AG04449 (cell line): ENCODE measurements at regions of chr12 and their contacts with region 1.

Region 1: DNA sequence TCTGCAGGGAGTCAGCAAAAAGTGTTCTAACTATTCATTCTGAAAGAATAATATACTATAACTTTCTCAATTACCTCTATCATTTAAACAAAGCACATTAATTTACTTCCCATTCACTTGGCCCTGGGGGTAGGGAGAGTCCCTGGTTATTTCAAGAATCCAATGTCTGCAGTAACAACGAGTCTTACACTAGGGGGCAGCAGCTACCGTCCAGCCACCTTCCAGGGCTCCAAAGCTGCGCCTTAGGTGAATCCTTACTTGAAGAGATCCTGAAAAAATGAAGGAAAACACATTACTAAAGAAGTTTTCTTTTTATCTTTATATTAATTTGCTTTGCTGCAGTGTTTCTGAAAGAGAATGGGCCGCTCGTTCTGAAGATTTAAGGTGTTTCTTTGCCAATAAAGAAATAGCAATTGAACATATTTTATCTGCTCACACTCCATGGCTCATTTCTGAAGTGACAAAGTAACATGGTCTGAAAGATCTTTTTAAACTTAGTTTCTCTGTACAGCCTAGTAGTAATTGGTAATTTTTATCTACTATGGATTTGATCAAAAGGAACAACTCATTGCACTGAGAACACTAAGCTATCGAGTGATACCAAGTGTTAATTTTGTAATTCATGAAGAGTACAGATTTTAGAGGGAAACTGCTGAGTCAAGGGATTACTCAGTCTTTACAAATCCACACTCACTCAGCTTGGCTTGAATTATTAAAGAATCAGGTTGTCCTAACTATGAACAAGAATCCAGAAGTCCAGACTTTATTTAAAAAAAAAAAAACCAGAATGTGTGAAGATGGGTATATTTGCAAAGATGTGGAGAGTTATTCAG is 27.6 kb downstream of the BHLHE41 start:
- DNase-seq: no peak
- H3K4me3 ChIP-seq: no peak overlapping the region
- CTCF ChIP-seq: peak; percentile 86

Region 2: DNA sequence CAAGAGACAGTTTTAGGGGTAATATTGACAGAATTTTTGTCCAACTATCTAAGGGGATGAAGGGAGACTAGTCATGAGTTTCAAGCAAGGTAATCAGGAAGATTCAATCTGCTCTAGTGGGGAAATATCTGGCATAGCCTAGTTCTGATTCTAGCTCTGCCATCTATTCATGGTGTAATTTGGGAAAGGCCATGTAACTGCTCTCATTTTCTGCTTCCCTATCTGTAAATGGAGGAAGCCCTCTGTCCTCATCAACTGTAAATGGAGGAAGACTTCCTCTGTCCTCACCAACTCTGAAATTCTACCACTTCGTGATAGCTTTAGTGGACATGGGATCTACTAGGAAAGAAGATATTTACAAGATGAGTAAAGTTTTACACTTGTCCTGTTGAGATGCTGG is 10.3 kb before region 1 on chr12:
- CTCF ChIA-PET with region 1: interaction called, 11 read pairs
- POLR2A ChIA-PET with region 1: no interaction called
- DNase-seq: no peak
- H3K4me3 ChIP-seq: no peak overlapping the region
- CTCF ChIP-seq: no peak

Region 3: DNA sequence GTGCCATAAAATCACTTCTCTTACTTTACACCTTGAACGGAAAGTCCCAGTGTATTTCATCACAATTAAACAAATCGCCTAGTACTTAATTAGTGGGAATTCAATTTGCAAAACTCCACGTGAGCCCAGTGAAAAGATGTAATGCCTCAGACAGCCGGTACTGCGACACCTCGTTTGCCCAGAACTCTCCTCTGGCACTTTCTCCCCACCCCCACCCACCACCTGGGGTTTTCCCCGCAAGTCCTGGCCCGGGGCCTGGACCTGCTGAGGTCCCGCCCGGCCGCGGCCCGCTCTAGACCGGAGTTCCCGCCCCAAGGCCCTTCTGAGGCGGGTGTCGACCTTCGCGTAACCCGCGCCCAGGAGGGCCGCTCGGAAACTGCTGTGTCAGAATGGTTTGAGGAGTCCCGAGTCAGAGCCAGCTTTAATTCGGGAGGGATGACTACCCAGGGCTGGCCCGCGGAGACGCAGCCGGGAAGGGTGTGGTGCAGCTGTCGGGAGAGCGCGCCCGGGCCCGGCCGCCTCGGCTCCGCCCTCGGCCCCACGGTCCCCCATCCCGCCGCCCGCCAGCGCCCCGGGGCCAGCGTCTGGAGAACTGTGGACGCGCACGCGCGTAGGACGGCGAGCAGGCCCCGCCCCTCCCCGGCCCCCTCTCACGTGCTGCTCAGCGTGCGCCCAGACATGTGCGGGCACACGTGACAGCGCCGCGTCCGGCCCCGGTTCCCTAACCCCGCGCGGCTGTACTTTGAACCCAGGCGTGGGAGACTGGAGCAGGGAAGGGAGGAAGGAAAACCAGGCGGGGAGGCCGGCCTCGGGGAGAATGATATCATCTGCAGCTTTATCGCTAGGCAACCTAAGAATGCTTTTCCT is 16.8 kb after region 1 on chr12:
- CTCF ChIA-PET with region 1: interaction called, 16 read pairs
- POLR2A ChIA-PET with region 1: interaction called, 4 read pairs
- DNase-seq: peak; percentile 24
- H3K4me3 ChIP-seq: peak overlapping the region; percentile 62
- CTCF ChIP-seq: peak; percentile 27